WTC11 (cell line): ENCODE measurements at regions of chr12 and their contacts with region 1.

Region 1: DNA sequence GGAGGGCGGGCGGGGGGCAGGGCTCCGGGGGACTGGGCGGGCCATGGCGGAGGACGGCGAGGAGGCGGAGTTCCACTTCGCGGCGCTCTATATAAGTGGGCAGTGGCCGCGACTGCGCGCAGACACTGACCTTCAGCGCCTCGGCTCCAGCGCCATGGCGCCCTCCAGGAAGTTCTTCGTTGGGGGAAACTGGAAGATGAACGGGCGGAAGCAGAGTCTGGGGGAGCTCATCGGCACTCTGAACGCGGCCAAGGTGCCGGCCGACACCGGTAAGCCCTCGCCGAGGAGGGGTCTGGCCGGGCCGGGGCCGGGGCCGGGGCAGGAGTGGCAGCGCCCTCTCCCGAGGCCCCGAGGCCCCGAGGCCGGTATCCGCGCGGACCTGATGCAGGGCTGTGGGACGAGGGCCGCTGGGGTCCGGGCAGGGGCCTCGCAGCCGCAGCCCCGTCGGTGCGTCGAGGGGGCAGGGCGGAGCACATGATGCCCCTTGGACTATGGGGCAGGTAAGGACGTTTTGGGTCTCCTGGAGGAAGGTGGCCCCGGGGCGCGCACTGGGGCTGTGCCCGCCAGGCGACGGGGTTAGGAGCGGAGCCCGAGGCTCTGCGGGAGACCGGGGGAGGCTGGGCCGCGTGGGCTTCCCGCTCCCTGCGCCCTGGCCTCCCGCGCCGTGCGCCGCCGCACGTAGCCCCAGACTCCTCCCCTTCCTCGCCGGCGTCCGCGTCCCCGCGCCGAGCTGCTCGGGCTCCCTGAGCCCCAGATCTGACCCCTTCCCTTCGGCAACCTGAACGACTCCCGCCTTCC is at the start of gene TPI1:
- DNase-seq: peak; percentile 79
- ATAC-seq: peak; percentile 63
- H3K4me3 Mint-ChIP-seq: peak within 1 kb of the TSS; percentile 89
- H3K27ac Mint-ChIP-seq: peak within 1 kb of the TSS; percentile 87
- H3K4me1 Mint-ChIP-seq: peaks cover 60% of the 10 kb centered on the region
- H3K27me3 Mint-ChIP-seq: no peaks in the 10 kb centered on the region
- CTCF ChIP-seq: no peak
- total RNA-seq, gene TPI1: 1,045 to 1,242 TPM (median 1,195 TPM) in 3 replicates

Region 2: DNA sequence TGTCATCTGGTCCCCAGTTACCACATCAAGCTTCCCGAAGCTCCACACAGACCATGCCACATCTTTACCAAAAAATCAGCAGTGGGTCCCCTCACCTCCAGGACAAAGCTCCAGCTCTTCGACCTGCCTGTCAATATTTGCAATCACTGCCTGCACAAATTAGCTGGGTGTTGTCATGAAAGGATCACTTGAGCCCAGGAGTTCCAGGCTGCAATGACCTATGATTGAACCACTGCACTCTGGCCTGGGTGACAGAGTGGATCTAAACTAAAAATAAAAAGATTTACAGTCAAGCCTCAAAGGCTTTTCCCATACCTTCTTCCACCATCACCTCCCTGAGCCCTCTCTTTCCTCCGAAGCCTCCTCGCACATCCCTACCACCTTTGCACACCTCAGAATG is 71.0 kb before region 1 on chr12:
- CTCF ChIA-PET with region 1: no interaction called
- POLR2A ChIA-PET with region 1: no interaction called
- DNase-seq: no peak
- ATAC-seq: no peak
- H3K4me3 Mint-ChIP-seq: no peak overlapping the region
- H3K27ac Mint-ChIP-seq: no peak overlapping the region
- H3K4me1 Mint-ChIP-seq: peaks cover 7% of the 10 kb centered on the region
- H3K27me3 Mint-ChIP-seq: peaks cover 27% of the 10 kb centered on the region
- CTCF ChIP-seq: no peak

Region 3: DNA sequence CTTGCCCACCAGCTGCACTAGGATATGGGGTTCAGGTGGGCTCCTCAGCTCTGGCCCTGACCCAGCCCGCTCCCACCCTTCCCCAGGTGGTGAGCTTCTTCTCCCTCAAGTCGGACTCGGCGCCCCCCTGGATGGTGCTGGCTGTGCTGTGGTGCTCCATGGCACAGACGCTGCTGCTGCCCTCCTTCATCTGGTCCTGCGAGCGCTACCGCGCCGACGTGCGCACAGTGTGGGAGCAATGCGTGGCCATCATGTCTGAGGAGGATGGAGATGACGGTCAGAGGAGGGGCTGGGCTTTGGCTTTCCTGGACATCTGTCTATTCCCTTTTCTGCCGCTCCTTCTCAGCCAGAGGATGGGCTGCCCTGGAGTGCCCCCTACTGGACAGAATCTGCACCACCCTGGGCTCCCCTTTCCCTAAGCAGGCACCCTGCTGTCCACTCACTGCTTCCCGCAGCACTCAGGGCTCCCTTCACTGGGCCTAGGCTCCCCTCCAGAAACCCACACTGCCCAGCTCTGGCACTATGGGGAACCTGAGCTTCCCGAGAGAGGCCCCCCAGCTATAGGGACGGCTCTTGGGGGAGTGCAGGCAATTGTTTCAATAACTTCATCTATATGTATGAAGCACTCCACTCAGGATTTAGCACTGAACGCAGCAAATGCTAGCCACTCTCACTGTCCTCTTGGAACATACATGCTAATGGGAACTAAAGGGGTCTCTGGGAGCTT is 42.1 kb before region 1 on chr12:
- CTCF ChIA-PET with region 1: interaction called, 11 read pairs
- POLR2A ChIA-PET with region 1: interaction called, 4 read pairs
- DNase-seq: peak; percentile 95
- ATAC-seq: peak; percentile 35
- H3K4me3 Mint-ChIP-seq: peak overlapping the region; percentile 78
- H3K27ac Mint-ChIP-seq: no peak overlapping the region
- H3K4me1 Mint-ChIP-seq: peaks cover 60% of the 10 kb centered on the region
- H3K27me3 Mint-ChIP-seq: peaks cover 45% of the 10 kb centered on the region
- CTCF ChIP-seq: peak; percentile 90

Region 4: GRCh38 chr12:6890789-6891645 is 23.4 kb after region 1 on chr12:
- CTCF ChIA-PET with region 1: interaction called, 83 read pairs
- POLR2A ChIA-PET with region 1: interaction called, 32 read pairs
- DNase-seq: peak; percentile 99
- ATAC-seq: peak; percentile 92
- H3K4me3 Mint-ChIP-seq: peak overlapping the region; percentile 71
- H3K27ac Mint-ChIP-seq: peak overlapping the region; percentile 99
- H3K4me1 Mint-ChIP-seq: peaks cover 33% of the 10 kb centered on the region
- H3K27me3 Mint-ChIP-seq: peaks cover 4% of the 10 kb centered on the region; the same call in 1 of the 2 replicates
- CTCF ChIP-seq: peak; percentile 35

Region 5: GRCh38 chr12:6914246-6914946 is 46.8 kb after region 1 on chr12 and contains the start of gene ENO2:
- CTCF ChIA-PET with region 1: interaction called, 45 read pairs
- POLR2A ChIA-PET with region 1: interaction called, 6 read pairs
- DNase-seq: peak; percentile 63
- ATAC-seq: peak; percentile 65
- H3K4me3 Mint-ChIP-seq: peak within 1 kb of the TSS; percentile 97
- H3K27ac Mint-ChIP-seq: peak within 1 kb of the TSS; percentile 64
- H3K4me1 Mint-ChIP-seq: peaks cover 33% of the 10 kb centered on the region
- H3K27me3 Mint-ChIP-seq: peaks cover 12% of the 10 kb centered on the region
- CTCF ChIP-seq: no peak
- total RNA-seq, gene ENO2: 118 to 170 TPM (median 165 TPM) in 3 replicates

Region 6: DNA sequence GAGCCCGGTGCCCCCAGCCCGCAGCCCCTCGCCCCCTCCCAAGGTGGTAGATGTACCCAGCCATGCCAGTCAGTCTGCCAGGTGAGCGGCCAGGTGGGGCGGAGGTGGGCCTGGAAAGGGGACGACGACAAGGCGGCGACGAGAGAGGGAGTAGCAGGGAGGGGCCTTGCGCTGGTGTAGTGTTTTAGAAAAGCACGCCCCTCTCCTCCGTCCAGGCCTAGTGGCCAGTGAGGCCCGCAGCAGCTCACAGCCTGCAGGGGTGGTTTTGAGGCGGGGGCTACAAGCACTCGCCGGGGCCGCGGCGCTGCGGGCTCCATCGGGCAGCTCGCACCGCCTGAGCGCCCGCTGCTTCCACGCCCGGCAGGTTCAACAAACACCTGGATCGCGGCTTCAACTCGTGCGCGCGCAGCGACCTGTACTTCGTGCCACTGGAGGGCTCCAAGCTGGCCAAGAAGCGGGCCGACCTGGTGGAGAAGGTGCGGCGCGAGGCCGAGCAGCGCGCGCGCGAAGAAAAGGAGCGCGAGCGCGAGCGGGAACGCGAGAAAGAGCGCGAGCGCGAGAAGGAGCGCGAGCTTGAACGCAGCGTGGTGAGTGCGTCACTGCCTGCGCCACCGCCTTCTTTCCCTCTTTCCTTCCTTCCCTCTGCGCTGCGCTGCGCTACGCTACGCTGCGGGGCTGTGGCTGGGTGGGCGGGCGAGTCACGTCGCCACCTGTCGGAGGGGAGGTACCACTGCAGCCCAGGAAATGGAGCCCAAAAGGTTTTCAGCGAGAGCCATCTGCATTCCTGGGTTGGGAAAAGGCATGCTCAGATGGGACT is 70.1 kb after region 1 on chr12:
- CTCF ChIA-PET with region 1: interaction called, 53 read pairs
- POLR2A ChIA-PET with region 1: interaction called, 14 read pairs
- DNase-seq: peak; percentile 94
- ATAC-seq: peak; percentile 83
- H3K4me3 Mint-ChIP-seq: peak overlapping the region; percentile 69
- H3K27ac Mint-ChIP-seq: peak overlapping the region; percentile 93
- H3K4me1 Mint-ChIP-seq: peaks cover 29% of the 10 kb centered on the region
- H3K27me3 Mint-ChIP-seq: no peaks in the 10 kb centered on the region
- CTCF ChIP-seq: peak; percentile 92

Region 7: GRCh38 chr12:6965026-6965661 is 97.5 kb after region 1 on chr12:
- CTCF ChIA-PET with region 1: interaction called, 48 read pairs
- POLR2A ChIA-PET with region 1: interaction called, 10 read pairs
- DNase-seq: peak; percentile 85
- ATAC-seq: peak; percentile 25
- H3K4me3 Mint-ChIP-seq: peak overlapping the region; percentile 75
- H3K27ac Mint-ChIP-seq: peak overlapping the region; percentile 95
- H3K4me1 Mint-ChIP-seq: peaks cover 60% of the 10 kb centered on the region
- H3K27me3 Mint-ChIP-seq: no peaks in the 10 kb centered on the region
- CTCF ChIP-seq: peak; percentile 71

Region 8: DNA sequence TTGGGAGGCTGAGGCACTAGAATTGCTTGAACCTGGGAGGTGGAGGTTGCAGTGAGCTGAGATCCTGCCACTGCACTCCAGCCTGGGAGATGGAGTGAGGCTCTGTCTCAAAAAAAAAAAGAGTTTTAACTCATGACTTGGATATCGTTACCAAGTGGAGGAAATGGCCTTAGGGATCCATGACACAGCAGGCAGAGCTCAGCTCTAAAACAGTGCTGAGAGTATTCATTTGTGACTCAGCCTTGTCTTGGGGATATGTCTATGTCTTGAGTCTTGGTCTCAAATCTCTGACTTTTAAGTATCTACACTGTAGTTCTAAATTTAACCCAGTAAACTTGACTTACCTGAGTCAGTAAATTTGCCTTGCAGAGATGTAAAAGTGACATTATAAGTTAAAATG is 313.1 kb after region 1 on chr12:
- CTCF ChIA-PET with region 1: no interaction called
- POLR2A ChIA-PET with region 1: no interaction called
- DNase-seq: no peak
- ATAC-seq: no peak
- H3K4me3 Mint-ChIP-seq: no peak overlapping the region
- H3K27ac Mint-ChIP-seq: no peak overlapping the region
- H3K4me1 Mint-ChIP-seq: peaks cover 2% of the 10 kb centered on the region
- H3K27me3 Mint-ChIP-seq: peaks cover 37% of the 10 kb centered on the region
- CTCF ChIP-seq: no peak